Ascending aorta (tissue), 2 donors: ENCODE measurements at regions of chr17 and their contacts with region 1.

Region 1: GRCh38 chr17:39621523-39622379 is 5.0 kb upstream of the PPP1R1B start:
- DNase-seq: peak; percentile 53 to 93
- H3K4me3 ChIP-seq: no peak overlapping the region
- H3K27ac ChIP-seq: no peak overlapping the region
- H3K4me1 ChIP-seq: peaks cover 1 to 5% of the 10 kb centered on the region in 2 donors
- H3K27me3 ChIP-seq: peaks cover 4% of the 10 kb centered on the region
- CTCF ChIP-seq: peak; percentile 98 to 100 (median 100)

Region 2: DNA sequence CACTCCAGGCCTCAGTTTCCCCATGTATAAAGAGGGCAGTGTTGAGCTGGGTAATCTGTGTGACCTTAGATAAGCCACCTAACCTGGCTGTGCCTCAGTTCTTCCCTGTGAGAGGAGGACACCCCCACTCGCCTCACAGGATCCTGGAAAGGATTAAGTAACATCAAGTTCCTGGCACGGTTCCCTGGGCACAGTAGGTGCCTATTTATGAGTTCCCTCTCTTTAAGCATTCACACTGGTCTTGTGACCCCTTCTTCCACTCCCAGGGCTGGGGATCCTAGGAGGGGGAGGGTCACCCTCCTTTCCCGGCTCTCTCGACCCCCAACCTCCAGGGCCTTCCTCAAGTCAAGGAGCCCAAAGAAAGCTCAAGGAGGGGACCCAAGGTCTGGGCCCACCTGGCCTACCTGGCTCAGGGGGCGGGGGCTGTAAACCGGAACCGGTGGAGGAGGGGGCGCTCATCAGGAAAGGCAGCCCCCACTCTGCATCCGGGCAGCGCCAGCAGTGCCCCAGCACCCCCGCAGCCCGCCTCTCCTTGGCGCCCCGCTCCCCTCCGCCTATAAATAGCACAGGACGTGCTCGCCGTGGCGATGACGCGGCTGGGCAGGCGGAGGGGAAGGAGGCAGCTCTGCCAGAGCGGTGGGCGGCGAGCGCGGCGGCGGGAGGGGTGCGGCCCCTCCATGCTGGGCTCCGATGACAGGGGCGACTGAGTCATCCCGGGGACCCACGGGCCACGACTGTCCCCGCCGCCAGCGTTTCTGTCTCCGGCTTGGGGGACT is 412.2 kb before region 1 on chr17:
- intact Hi-C with region 1: no loop called
- DNase-seq: peak; percentile 79 to 94
- H3K4me3 ChIP-seq: peak overlapping the region; percentile 32 to 68
- H3K27ac ChIP-seq: peak overlapping the region; percentile 82 to 94
- H3K4me1 ChIP-seq: peaks cover 16 to 30% of the 10 kb centered on the region in 2 donors
- H3K27me3 ChIP-seq: no peaks in the 10 kb centered on the region
- CTCF ChIP-seq: no peak

Region 3: DNA sequence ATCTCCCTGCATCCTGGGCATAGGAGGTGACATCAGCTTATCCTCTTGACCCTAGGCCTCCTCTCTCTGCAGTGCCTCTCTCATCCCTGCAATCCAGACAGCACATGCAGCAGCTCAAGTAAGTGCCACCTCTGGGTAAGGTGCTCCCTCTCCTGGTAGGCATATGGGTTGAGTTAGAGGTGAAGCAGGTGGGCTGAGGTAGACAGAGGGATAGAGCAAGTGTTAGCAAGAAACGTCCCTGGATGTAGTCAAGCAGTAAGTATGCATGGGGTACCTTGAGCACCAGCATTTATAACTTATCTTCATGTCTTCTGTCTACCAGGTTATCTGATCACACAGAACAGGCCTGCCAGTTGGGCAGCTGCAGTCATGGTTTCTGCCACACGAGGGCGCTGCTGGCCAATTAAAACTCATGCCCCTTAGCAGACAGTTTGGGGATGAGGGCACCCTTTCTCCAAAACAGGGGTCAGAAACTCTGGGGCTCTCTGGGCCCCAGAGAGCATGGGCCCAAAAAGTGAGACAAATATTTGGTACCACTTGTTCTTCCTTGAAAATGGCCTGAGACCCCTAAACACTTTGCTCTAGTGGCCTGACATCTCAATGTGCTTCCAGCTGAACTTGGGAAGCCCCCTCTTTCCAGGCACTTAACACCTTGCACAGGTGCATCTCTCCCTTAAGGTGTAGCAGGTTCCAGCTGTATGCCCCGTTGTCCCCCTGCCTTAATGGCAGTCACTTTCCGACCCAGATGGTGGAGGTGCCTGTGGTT is 73.9 kb before region 1 on chr17:
- intact Hi-C with region 1: loop called (anchors 1 kb)
- DNase-seq: peak in 1 of 2 donors; percentile 75
- H3K4me3 ChIP-seq: no peak overlapping the region
- H3K27ac ChIP-seq: no peak overlapping the region
- H3K4me1 ChIP-seq: peaks cover 0 to 4% of the 10 kb centered on the region in 2 donors
- H3K27me3 ChIP-seq: no peaks in the 10 kb centered on the region
- CTCF ChIP-seq: peak; percentile 72 to 83 (median 80)

Region 4: GRCh38 chr17:39636927-39637736 is 15.4 kb after region 1 on chr17 and contains the start of gene STARD3:
- intact Hi-C with region 1: loop called (anchors 1 kb)
- DNase-seq: peak; percentile 63 to 93
- H3K4me3 ChIP-seq: peak within 1 kb of the TSS; percentile 68 to 84
- H3K27ac ChIP-seq: peak within 1 kb of the TSS; percentile 83 to 89
- H3K4me1 ChIP-seq: peaks cover 11 to 27% of the 10 kb centered on the region in 2 donors
- H3K27me3 ChIP-seq: no peaks in the 10 kb centered on the region
- CTCF ChIP-seq: peak; percentile 13 to 34 (median 14)
- total RNA-seq, gene STARD3: 87.6 TPM